ENCODE measurements at regions of chr3 and their contacts with region 1.

Region 1: DNA sequence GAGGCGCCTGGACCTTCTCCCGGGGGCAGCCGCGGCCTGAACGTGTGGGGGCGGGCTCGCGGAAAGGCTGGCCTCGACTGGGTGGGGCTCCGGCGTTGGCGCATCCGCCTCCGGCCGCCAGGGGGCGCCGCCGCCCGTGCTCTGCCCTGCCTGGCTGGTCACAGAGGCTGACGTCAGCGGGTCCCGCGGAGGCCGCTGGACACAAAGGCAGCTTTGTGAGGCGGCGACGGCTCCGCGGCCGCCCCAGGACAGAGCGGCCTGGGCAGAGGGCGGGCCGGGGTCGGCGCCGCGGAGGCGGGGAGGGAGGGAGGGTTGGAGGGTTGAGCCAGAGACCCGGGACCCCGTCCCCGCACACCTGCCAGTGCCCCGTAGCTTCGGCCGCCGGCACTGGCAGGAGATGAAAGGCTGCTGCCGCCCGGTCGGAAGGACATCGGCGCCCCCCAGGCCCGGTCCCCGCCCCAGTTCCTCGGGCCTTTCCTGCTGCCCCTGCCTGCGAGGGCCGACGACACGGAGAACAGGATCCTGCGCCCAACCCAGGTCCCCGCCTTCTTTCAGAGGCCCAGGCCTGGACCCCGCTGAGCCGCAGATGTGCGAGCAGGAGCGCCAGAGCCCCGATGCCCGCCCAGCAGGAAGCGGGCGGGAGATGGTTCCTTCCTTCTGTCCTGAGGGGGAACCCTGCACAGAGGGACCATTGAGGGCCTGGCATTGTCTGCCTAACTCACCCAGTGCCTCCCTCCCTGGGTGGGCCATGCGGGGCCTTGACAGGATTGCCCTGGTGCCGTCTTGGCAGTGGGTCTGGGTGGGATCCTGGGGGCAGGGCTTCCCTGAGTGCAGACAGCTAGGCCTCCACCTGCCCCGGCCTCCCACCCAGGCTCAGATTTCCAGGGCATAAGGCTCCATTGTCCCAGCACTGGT is 8.7 kb upstream of the SEMA3B start:
- DNase-seq: peak; percentile 93
- H3K4me3 ChIP-seq: peak overlapping the region in 2 of 3 experiments; percentile 25 to 31
- H3K27ac ChIP-seq: peak overlapping the region; percentile 88
- H3K4me1 ChIP-seq: peaks cover 28% of the 10 kb centered on the region
- H3K27me3 ChIP-seq: no peaks in the 10 kb centered on the region
- CTCF ChIP-seq: peak; percentile 97 to 99
- POLR2A ChIP-seq: peak; percentile 88

Region 2: GRCh38 chr3:50121416-50122032 is 138.8 kb before region 1 on chr3:
- CTCF ChIA-PET with region 1: no interaction called
- POLR2A ChIA-PET with region 1: no interaction called
- dilution Hi-C with region 1: no loop called
- intact Hi-C with region 1: loop called (anchors 10 kb)
- DNase-seq: peak; percentile 80
- H3K4me3 ChIP-seq: no peak overlapping the region
- H3K27ac ChIP-seq: no peak overlapping the region
- H3K4me1 ChIP-seq: peaks cover 7% of the 10 kb centered on the region
- H3K27me3 ChIP-seq: no peaks in the 10 kb centered on the region
- CTCF ChIP-seq: peak; percentile 75 to 79
- POLR2A ChIP-seq: peak; percentile 77

Region 3: DNA sequence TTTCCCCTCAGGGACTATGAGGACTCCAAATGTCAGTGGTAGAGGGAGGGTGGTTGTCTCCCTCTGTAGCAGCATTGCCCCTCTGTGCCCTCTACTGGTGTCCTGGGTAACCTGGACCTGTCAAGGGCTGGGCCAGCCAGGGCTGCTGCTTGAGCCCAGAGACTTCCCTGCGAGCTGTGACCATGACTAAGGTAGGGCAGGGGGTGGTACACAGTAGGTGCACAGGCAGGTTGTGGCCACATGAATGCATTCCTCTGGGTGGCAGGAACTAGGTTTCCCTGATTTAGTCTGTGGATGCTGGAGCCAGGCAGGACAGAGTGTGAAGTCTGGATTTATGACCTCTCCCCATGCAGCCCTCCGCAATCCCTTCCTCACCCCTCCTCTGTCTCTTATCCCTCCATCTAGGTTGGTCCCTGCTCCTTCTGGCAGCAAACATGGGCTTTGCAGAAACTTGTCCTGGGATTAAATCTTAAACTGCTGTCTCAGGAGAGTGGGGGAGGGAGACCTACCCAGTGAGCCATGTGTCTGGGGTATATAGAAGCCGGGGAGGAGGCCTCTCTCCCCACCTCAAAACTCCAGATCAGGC is 113.9 kb before region 1 on chr3:
- CTCF ChIA-PET with region 1: no interaction called
- POLR2A ChIA-PET with region 1: no interaction called
- dilution Hi-C with region 1: no loop called
- intact Hi-C with region 1: no loop called
- DNase-seq: no peak
- H3K4me3 ChIP-seq: no peak overlapping the region
- H3K27ac ChIP-seq: no peak overlapping the region
- H3K4me1 ChIP-seq: no peaks in the 10 kb centered on the region
- H3K27me3 ChIP-seq: no peaks in the 10 kb centered on the region
- CTCF ChIP-seq: peak in 1 of 2 donors; percentile 6
- POLR2A ChIP-seq: no peak

Region 4: GRCh38 chr3:50205414-50206276 is 54.6 kb before region 1 on chr3:
- CTCF ChIA-PET with region 1: interaction called, 4 read pairs
- POLR2A ChIA-PET with region 1: interaction called, 16 read pairs
- dilution Hi-C with region 1: no loop called
- intact Hi-C with region 1: no loop called
- DNase-seq: peak; percentile 31
- H3K4me3 ChIP-seq: peak overlapping the region in 2 of 3 experiments; percentile 27 to 36
- H3K27ac ChIP-seq: no peak overlapping the region
- H3K4me1 ChIP-seq: peaks cover 3% of the 10 kb centered on the region
- H3K27me3 ChIP-seq: peaks cover 18% of the 10 kb centered on the region in 2 experiments
- CTCF ChIP-seq: no peak
- POLR2A ChIP-seq: no peak

Region 5: GRCh38 chr3:50227390-50228183 is 32.7 kb before region 1 on chr3:
- CTCF ChIA-PET with region 1: interaction called, 98 read pairs
- POLR2A ChIA-PET with region 1: no interaction called
- dilution Hi-C with region 1: no loop called
- intact Hi-C with region 1: loop called (anchors 1 kb)
- DNase-seq: peak; percentile 62
- H3K4me3 ChIP-seq: peak overlapping the region; percentile 19 to 50 (median 33)
- H3K27ac ChIP-seq: no peak overlapping the region
- H3K4me1 ChIP-seq: peaks cover 13% of the 10 kb centered on the region
- H3K27me3 ChIP-seq: no peaks in the 10 kb centered on the region
- CTCF ChIP-seq: peak; percentile 66 to 76
- POLR2A ChIP-seq: peak; percentile 57

Region 6: GRCh38 chr3:50235716-50236496 is 24.4 kb before region 1 on chr3 and contains the start of gene GNAI2:
- CTCF ChIA-PET with region 1: interaction called, 98 read pairs
- POLR2A ChIA-PET with region 1: interaction called, 14 read pairs
- dilution Hi-C with region 1: no loop called
- intact Hi-C with region 1: loop called (anchors 1 kb)
- DNase-seq: peak; percentile 99
- H3K4me3 ChIP-seq: peak within 1 kb of the TSS; percentile 80 to 88 (median 81)
- H3K27ac ChIP-seq: peak within 1 kb of the TSS; percentile 60
- H3K4me1 ChIP-seq: peaks cover 27% of the 10 kb centered on the region
- H3K27me3 ChIP-seq: no peaks in the 10 kb centered on the region
- CTCF ChIP-seq: no peak
- POLR2A ChIP-seq: peak; percentile 98
- total RNA-seq, gene GNAI2: 767 and 773 TPM in 2 replicates

Region 7: DNA sequence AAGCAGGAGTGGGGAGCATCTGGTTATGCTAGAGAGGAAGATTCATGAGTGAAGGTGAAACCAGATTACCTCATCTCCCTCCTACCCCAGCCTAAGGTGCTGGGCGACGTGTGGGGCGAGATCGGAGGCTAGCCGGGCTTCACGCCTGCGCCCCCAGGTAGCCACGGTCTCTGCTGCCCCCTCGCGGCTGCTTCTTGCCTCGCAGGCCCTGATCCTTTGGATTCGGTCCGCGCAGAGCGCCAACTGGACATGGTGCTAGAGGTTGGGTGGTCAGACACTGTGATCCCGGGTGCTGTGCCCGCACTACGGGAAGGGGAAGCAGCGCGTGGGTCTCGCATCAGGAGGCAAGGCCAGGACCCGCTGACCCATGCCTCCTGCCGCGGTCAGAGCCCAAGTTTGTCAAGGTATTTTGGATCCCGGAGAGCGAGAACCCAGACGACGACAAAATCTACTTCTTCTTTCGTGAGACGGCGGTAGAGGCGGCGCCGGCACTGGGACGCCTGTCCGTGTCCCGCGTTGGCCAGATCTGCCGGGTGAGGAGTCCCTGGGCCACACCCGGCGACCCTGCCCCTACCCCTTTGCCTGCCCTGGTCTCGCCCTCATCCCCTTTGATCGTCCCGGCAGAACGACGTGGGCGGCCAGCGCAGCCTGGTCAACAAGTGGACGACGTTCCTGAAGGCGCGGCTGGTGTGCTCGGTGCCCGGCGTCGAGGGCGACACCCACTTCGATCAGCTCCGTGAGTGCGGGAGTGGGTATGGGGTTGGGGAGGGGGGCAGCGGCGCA is 12.8 kb after region 1 on chr3:
- CTCF ChIA-PET with region 1: interaction called, 5 read pairs
- POLR2A ChIA-PET with region 1: no interaction called
- dilution Hi-C with region 1: no loop called
- intact Hi-C with region 1: loop called (anchors 1 kb)
- DNase-seq: peak; percentile 84
- H3K4me3 ChIP-seq: peak overlapping the region in 2 of 3 experiments; percentile 13 to 14
- H3K27ac ChIP-seq: no peak overlapping the region
- H3K4me1 ChIP-seq: peaks cover 2% of the 10 kb centered on the region
- H3K27me3 ChIP-seq: peaks cover 18 to 24% of the 10 kb centered on the region in 2 experiments
- CTCF ChIP-seq: peak; percentile 93 to 98
- POLR2A ChIP-seq: no peak

Region 8: DNA sequence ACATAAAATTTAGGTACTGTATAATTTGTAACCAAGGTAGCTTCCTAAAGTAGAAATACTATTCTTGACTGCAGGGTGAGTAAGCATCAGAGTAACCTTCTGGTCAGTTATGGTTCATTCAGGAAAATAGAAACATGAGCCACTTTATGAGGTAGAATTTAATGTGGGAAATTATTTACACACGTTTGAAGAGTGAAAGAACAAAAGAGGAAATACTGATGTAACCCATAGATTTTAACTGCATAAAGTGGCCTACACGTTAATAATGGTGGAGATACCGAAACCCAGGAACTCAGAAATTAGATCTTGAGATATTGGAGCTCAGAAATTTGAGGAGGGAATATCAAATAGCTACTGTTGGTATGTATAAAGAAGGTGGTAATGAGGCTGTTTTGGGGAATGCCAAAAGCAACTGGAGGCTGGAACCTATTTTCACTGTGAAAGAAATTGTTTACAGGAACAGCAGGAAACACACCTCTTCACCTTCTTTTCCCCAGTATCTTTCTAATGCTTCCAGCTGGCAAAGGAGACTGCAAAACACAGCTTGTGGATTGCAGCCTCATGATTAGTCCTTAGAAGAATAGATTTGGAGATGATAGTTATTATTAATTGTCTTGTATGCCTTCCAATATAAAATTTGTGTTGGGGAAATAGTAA is 630.5 kb after region 1 on chr3:
- CTCF ChIA-PET with region 1: no interaction called
- POLR2A ChIA-PET with region 1: no interaction called
- dilution Hi-C with region 1: no loop called
- intact Hi-C with region 1: no loop called
- DNase-seq: no peak
- H3K4me3 ChIP-seq: no peak overlapping the region
- H3K27ac ChIP-seq: no peak overlapping the region
- H3K4me1 ChIP-seq: no peaks in the 10 kb centered on the region
- H3K27me3 ChIP-seq: no peaks in the 10 kb centered on the region
- CTCF ChIP-seq: no peak
- POLR2A ChIP-seq: no peak

Measured in endothelial cell of umbilical vein (primary cell).